K562 (cell line): ENCODE measurements at regions of chr12 and their contacts with region 1.

Region 1: GRCh38 chr12:3034067-3034750 is 43.0 kb upstream of the TSPAN9 start:
- DNase-seq: peak; percentile 67 to 74 (median 70)
- ATAC-seq: peak; percentile 97
- H3K4me3 ChIP-seq: no peak overlapping the region
- H3K27ac ChIP-seq: no peak overlapping the region
- H3K4me1 ChIP-seq: peaks cover 0 to 15% of the 10 kb centered on the region in 2 experiments; a peak in 2 of 5 replicates
- H3K27me3 ChIP-seq: no peaks in the 10 kb centered on the region
- CTCF ChIP-seq: peak; percentile 68 to 75 (median 68)
- EP300 ChIP-seq: no peak
- POLR2A ChIP-seq: no peak
- RAD21 ChIP-seq: peak; percentile 41 to 70

Region 2: GRCh38 chr12:2845280-2845679 is 188.9 kb before region 1 on chr12:
- CTCF ChIA-PET with region 1: interaction called, 4 read pairs
- POLR2A ChIA-PET with region 1: no interaction called
- in situ Hi-C with region 1: loop called (anchors 5 kb)
- intact Hi-C with region 1: no loop called
- DNase-seq: peak in 1 of 4 experiments; percentile 24
- ATAC-seq: peak; percentile 50
- H3K4me3 ChIP-seq: no peak overlapping the region
- H3K27ac ChIP-seq: no peak overlapping the region; the same call in 2 of the 3 replicates
- H3K4me1 ChIP-seq: peaks cover 8% of the 10 kb centered on the region in 2 experiments; a peak in 4 of 5 replicates
- H3K27me3 ChIP-seq: no peaks in the 10 kb centered on the region
- CTCF ChIP-seq: no peak
- EP300 ChIP-seq: no peak
- POLR2A ChIP-seq: no peak
- RAD21 ChIP-seq: no peak

Region 3: DNA sequence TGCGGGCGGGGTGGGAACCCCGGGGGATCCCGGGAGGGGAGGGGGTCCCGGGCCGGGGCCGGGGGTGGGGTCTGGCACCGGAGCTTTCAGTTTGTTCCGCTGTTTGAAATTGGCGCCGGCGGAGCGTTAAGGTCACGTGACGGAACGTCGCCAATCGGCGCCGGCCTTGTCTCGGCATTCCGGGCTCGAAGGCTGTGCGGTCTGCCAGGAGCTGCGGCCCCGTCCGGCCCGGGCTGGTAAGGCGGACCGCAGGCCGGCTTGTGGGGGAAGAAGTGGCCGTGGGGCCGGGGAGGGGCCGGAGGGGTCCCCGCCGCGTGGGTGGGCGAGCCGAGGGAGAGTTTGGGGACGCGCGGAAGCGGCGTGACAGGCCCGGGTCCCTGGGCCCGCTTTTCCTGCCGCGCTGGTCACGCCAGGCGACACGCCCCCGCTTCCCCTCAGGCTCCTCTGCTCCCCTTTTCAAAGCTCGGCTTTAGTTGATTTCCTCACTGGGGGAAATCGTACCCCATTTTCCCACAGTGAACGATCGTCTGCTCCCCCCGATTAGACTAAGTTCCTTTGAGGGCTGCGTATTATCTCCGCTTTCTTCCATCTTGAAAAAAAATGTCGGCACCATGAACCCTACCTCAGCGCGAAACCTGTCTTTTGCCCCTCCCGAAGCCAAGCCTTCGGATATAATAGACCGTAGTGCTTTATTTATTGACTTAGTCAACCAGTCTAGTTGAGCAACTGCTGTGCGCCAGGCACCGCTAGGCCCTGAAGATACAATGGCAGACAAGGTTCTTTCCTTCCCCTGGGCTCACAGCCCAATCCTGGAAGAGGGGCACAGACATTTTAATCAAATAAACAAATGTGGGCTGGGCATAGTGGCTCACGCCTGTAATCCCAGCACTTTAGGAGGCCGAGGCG is 156.9 kb before region 1 on chr12 and contains the starts of genes FOXM1 and RHNO1:
- CTCF ChIA-PET with region 1: no interaction called
- POLR2A ChIA-PET with region 1: no interaction called
- in situ Hi-C with region 1: loop called (anchors 10 kb)
- intact Hi-C with region 1: no loop called
- DNase-seq: peak; percentile 84 to 88 (median 85)
- ATAC-seq: peak; percentile 89
- H3K4me3 ChIP-seq: peak within 1 kb of the TSS; percentile 92
- H3K27ac ChIP-seq: peak within 1 kb of the TSS; percentile 85
- H3K4me1 ChIP-seq: peaks cover 7 to 12% of the 10 kb centered on the region in 2 experiments; a peak in 4 of 5 replicates
- H3K27me3 ChIP-seq: no peaks in the 10 kb centered on the region
- CTCF ChIP-seq: no peak
- EP300 ChIP-seq: no peak
- POLR2A ChIP-seq: peak; percentile 79
- RAD21 ChIP-seq: no peak
- polyA plus RNA-seq, gene FOXM1: 8.9 to 9.5 TPM
- polyA plus RNA-seq, gene RHNO1: 20.8 to 30.7 TPM

Region 4: DNA sequence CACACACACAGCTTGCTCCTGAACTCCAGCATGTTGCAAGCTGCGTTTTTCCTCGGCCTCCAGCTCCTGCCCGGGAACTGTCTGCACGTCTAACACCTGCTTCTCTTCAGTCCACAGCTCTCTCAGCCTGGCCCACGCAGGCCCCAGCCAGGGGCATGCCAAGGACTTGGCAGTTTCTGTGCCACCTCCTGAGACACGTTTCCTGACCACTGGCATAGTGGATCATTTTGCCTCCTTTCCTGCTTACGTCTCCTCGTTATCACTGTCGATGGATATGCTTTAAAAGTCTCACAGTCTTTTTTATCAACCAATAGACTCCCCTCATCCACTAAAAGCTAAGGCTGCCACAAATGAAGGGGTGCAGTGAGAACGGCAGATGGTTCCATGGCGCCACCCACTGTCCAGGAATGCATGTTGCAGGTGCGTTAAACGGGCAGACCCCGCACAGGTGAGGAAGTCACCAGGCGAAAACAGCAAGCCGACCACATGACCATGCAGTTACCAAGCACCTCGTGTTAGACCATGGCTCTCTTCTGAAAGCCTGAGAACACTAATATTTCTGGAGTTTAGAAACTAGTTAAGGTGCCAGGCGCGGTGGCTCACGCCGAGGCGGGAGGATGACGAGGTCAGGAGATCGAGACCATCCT is 89.7 kb before region 1 on chr12:
- CTCF ChIA-PET with region 1: interaction called, 4 read pairs
- POLR2A ChIA-PET with region 1: no interaction called
- in situ Hi-C with region 1: no loop called
- intact Hi-C with region 1: loop called (anchors 2 kb)
- DNase-seq: peak; percentile 60 to 69 (median 64)
- ATAC-seq: peak; percentile 90
- H3K4me3 ChIP-seq: no peak overlapping the region
- H3K27ac ChIP-seq: no peak overlapping the region; the same call in 2 of the 3 replicates
- H3K4me1 ChIP-seq: peaks cover 5 to 6% of the 10 kb centered on the region in 2 experiments; a peak in 3 of 5 replicates
- H3K27me3 ChIP-seq: no peaks in the 10 kb centered on the region
- CTCF ChIP-seq: peak; percentile 78 to 85 (median 81)
- EP300 ChIP-seq: no peak
- POLR2A ChIP-seq: no peak
- RAD21 ChIP-seq: peak; percentile 40 to 77; a peak in 3 of 4 replicates

Region 5: DNA sequence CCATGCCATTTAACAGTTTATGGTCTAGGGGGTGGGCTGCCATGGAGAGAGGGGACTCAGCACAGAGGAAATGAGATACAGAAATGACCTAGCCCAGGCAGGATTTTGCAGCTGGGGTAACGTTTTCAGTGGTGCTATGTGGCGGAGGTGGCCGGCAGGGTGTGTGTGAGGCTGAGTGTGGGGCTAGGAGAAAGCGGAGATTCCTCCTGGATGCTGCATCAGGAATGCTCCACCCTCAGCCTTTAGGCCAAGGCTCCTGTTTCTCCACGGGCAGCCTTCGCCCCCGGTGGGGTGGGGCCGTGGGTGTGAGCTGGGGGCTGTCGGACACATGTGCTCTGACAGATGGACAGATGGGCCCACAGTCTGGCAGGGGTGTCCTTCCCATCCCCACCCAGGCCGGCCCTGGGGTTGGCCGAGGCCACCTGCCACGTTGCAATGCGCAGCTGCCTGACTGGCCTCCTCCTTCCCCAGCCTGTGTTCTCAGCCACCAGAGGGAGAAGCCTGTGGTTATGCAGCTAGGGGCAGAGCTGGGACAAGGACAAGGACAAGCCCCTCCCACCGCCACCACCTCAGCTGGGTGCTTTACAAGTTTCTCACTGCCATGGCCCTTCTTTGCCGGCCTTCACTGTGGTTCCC is 30.7 kb before region 1 on chr12:
- CTCF ChIA-PET with region 1: no interaction called
- POLR2A ChIA-PET with region 1: no interaction called
- in situ Hi-C with region 1: no loop called
- intact Hi-C with region 1: no loop called
- DNase-seq: no peak
- ATAC-seq: no peak
- H3K4me3 ChIP-seq: no peak overlapping the region
- H3K27ac ChIP-seq: no peak overlapping the region
- H3K4me1 ChIP-seq: peaks cover 16 to 23% of the 10 kb centered on the region in 2 experiments
- H3K27me3 ChIP-seq: no peaks in the 10 kb centered on the region
- CTCF ChIP-seq: 0 out of 6 replicates have a peak, but pooled peaks of 1 of the 3 experiments have one; percentile 16
- EP300 ChIP-seq: no peak
- POLR2A ChIP-seq: no peak
- RAD21 ChIP-seq: no peak

Region 6: DNA sequence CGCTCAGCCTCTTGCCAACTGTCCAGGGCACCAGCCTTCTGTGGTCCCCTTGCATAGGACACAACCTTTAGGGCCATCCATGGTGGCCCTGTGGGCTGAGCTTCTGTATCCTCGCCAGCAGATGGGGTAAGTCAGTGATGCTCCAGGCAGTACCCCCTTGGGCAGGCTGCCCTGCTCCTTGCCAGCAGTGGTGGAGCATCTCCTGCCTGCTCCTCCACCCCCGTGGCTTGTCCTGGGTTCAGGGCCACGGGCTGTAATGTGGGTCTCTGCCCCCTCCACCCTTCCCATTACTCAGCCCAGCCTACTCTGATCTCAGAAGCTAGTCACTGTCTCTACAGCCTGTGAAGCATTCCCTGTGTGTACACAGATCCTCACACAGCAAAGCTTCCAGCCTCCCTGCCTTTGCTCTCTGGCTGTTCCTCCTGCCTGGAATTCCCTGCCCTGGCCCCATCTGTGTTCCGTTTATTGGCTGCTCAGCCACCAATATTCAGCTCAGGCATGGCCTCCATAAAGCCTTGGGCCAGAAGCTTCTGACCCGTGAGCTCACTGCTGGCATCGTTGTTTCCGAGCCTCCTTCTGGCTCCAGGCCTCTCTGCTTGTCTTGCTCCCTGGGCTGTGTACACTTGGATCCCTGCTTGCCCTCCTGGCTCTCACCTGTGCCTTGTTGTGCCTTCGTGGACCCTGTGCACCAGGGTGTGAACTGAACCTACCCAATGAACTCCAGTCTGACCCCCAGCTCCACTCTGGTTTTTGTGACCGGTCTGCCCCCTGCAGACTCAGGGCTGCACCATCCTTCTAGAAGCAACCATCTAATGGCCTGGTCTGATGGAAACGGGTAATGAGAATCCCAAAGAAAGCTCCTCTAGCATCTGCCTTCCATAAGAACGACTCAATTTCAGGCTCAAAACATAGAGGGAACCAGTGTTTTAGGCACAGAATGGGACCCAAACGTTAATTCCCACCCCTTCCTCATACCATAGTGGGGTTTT is 279.8 kb after region 1 on chr12:
- CTCF ChIA-PET with region 1: no interaction called
- POLR2A ChIA-PET with region 1: no interaction called
- in situ Hi-C with region 1: no loop called
- intact Hi-C with region 1: no loop called
- DNase-seq: peak; percentile 12 to 22 (median 14)
- ATAC-seq: peak; percentile 81
- H3K4me3 ChIP-seq: no peak overlapping the region
- H3K27ac ChIP-seq: no peak overlapping the region
- H3K4me1 ChIP-seq: no peaks in the 10 kb centered on the region
- H3K27me3 ChIP-seq: peaks cover 0 to 37% of the 10 kb centered on the region in 2 experiments; a peak in 2 of 5 replicates
- CTCF ChIP-seq: peak; percentile 4 to 37 (median 23); a peak in 2 of 6 replicates
- EP300 ChIP-seq: no peak
- POLR2A ChIP-seq: no peak
- RAD21 ChIP-seq: peak in 1 of 2 experiments; percentile 19; a peak in 1 of 4 replicates